PC-3 (cell line): ENCODE measurements at regions of chr12 and their contacts with region 1.

Region 1: GRCh38 chr12:71780237-71780822 is 25.7 kb downstream of the RAB21 start:
- DNase-seq: peak; percentile 63
- ATAC-seq: peak; percentile 43; the same call in 1 of the 2 replicates
- H3K4me3 ChIP-seq: no peak overlapping the region
- H3K27ac ChIP-seq: no peak overlapping the region
- H3K4me1 ChIP-seq: no peaks in the 10 kb centered on the region
- H3K27me3 ChIP-seq: no peaks in the 10 kb centered on the region
- CTCF ChIP-seq: peak; percentile 92

Region 2: GRCh38 chr12:71799106-71799505 is 18.8 kb after region 1 on chr12:
- CTCF ChIA-PET with region 1: no interaction called
- POLR2A ChIA-PET with region 1: no interaction called
- intact Hi-C with region 1: no loop called
- DNase-seq: peak; percentile 55
- ATAC-seq: peak; percentile 91
- H3K4me3 ChIP-seq: no peak overlapping the region
- H3K27ac ChIP-seq: no peak overlapping the region
- H3K4me1 ChIP-seq: peaks cover 6% of the 10 kb centered on the region; the same call in 1 of the 2 replicates
- H3K27me3 ChIP-seq: no peaks in the 10 kb centered on the region
- CTCF ChIP-seq: no peak

Region 3: GRCh38 chr12:71838676-71839075 is 58.3 kb after region 1 on chr12:
- CTCF ChIA-PET with region 1: no interaction called
- POLR2A ChIA-PET with region 1: no interaction called
- intact Hi-C with region 1: loop called (anchors 2 kb)
- DNase-seq: no peak
- ATAC-seq: no peak
- H3K4me3 ChIP-seq: no peak overlapping the region
- H3K27ac ChIP-seq: peak overlapping the region; percentile 87; the same call in 1 of the 2 replicates
- H3K4me1 ChIP-seq: peaks cover 17% of the 10 kb centered on the region
- H3K27me3 ChIP-seq: no peaks in the 10 kb centered on the region
- CTCF ChIP-seq: no peak

Region 4: GRCh38 chr12:71846322-71846940 is 66.1 kb after region 1 on chr12:
- CTCF ChIA-PET with region 1: interaction called, 12 read pairs
- POLR2A ChIA-PET with region 1: no interaction called
- intact Hi-C with region 1: loop called (anchors 1 kb)
- DNase-seq: peak; percentile 62
- ATAC-seq: peak; percentile 44; the same call in 1 of the 2 replicates
- H3K4me3 ChIP-seq: no peak overlapping the region
- H3K27ac ChIP-seq: no peak overlapping the region
- H3K4me1 ChIP-seq: peaks cover 11% of the 10 kb centered on the region
- H3K27me3 ChIP-seq: no peaks in the 10 kb centered on the region
- CTCF ChIP-seq: peak; percentile 76

Region 5: GRCh38 chr12:71900091-71900490 is 119.8 kb after region 1 on chr12:
- CTCF ChIA-PET with region 1: no interaction called
- POLR2A ChIA-PET with region 1: no interaction called
- intact Hi-C with region 1: loop called (anchors 1 kb)
- DNase-seq: peak; percentile 53
- ATAC-seq: peak; percentile 69; the same call in 1 of the 2 replicates
- H3K4me3 ChIP-seq: no peak overlapping the region
- H3K27ac ChIP-seq: no peak overlapping the region
- H3K4me1 ChIP-seq: no peaks in the 10 kb centered on the region
- H3K27me3 ChIP-seq: no peaks in the 10 kb centered on the region
- CTCF ChIP-seq: peak; percentile 64

Region 6: GRCh38 chr12:72207486-72208409 is 427.4 kb after region 1 on chr12:
- CTCF ChIA-PET with region 1: no interaction called
- POLR2A ChIA-PET with region 1: no interaction called
- intact Hi-C with region 1: no loop called
- DNase-seq: no peak
- ATAC-seq: no peak
- H3K4me3 ChIP-seq: no peak overlapping the region
- H3K27ac ChIP-seq: no peak overlapping the region
- H3K4me1 ChIP-seq: no peaks in the 10 kb centered on the region
- H3K27me3 ChIP-seq: no peaks in the 10 kb centered on the region
- CTCF ChIP-seq: no peak